ENCODE measurements at regions of chr3 and their contacts with region 1.

Region 1: DNA sequence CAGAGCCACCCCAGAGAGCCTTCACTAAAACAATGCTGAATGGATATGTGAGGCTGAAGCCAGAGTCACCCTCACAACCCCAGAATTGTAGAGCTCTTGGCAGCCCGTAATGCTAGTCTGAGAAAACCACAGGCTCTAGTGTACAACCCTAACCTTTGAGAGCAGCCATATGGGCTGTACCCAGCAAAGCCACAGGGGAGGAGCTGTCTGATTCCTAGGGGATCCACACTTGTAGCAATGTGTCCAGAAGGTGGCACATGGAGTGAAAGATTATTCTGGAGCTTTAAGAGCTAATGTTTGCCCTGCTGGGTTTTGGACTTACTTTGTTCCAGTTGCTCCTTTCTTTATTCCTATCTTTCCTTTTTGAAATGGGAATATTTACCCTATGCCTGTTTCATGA is 626.8 kb downstream of the GRM7 start:
- DNase-seq: no peak
- ATAC-seq: no peak
- H3K4me3 ChIP-seq: no peak overlapping the region
- H3K27ac ChIP-seq: no peak overlapping the region
- H3K4me1 ChIP-seq: no peaks in the 10 kb centered on the region
- H3K27me3 ChIP-seq: no peaks in the 10 kb centered on the region
- CTCF ChIP-seq: no peak

Region 2: GRCh38 chr3:7456386-7456785 is 31.4 kb before region 1 on chr3:
- intact Hi-C with region 1: no loop called
- DNase-seq: no peak
- ATAC-seq: no peak
- H3K4me3 ChIP-seq: no peak overlapping the region
- H3K27ac ChIP-seq: no peak overlapping the region
- H3K4me1 ChIP-seq: no peaks in the 10 kb centered on the region
- H3K27me3 ChIP-seq: no peaks in the 10 kb centered on the region
- CTCF ChIP-seq: no peak

Region 3: GRCh38 chr3:7536921-7537320 is 49.2 kb after region 1 on chr3:
- intact Hi-C with region 1: loop called in 1 of 2 experiments (anchors 1 kb)
- DNase-seq: no peak
- ATAC-seq: no peak
- H3K4me3 ChIP-seq: no peak overlapping the region
- H3K27ac ChIP-seq: no peak overlapping the region
- H3K4me1 ChIP-seq: no peaks in the 10 kb centered on the region
- H3K27me3 ChIP-seq: no peaks in the 10 kb centered on the region
- CTCF ChIP-seq: no peak

Measured in psoas muscle (tissue), 8 donors.